ENCODE measurements at regions of chr2 and their contacts with region 1.

Region 1: DNA sequence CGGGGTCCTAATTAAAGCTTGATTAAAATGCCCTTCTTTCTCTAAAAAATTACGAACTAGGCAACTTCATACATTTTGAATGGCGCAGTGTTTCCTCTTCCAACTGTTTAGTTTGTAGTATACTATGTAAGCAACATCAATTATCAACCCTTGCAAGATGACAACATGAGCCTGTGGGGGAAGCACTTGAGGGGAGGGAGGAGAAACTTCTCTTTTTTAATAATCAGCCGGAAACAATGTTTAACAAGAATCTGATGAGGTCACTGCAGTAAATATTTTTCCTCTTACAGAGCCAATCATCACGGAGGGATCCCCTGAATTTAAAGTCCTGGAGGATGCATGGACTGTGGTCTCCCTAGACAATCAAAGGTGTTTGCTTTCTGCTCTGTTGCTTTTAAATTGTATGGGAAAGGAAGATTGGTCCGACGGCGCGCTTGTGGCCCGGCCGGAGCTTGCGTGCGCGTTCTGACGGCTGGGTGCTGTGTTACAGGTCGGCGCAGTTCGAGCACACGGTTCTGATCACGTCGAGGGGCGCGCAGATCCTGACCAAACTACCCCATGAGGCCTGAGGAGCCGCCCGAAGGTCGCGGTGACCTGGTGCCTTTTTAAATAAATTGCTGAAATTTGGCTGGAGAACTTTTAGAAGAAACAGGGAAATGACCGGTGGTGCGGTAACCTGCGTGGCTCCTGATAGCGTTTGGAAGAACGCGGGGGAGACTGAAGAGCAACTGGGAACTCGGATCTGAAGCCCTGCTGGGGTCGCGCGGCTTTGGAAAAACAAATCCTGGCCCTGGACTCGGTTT is 5.3 kb upstream of the DLX1 start:
- DNase-seq: no peak
- H3K4me3 ChIP-seq: no peak overlapping the region
- CTCF ChIP-seq: no peak

Region 2: DNA sequence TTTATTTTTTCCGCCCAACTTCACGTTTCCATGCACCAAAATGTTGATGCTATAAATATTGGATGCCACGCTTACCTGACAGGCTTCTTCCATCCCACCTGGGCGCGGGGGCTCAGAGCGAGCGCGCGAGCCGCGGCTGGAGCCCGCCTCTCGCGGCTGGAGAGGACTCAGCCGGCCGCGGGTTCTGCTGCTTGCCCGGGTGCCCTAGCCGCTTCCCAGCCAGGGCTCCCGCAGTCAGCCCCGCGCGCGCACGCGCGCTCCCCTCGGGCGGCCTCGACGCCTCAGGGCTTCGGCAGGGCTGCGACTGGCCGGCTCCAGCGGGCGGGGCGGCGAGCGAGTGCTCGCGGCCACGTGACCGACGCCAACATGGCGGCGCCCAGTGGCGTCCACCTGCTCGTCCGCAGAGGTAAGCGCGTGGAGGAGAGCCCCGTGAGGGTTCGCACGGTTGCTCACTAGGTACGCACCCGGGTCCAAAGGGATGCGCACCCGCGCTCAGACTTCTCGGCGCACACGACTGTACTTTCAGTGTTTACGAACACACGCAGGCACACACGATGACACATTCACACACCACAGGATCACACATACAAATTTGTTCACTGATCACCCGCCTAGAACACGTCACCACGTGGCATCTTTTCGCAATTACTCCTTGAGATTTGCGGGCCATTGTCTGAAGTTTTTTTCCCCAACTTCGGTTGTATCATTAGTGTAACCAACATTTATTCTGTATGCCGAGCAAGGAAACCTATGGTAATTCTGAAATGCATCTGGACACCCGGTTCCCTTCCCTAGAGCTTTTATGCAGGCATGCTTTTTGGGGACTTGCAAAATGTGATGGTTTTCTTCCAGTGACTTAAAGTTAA is 80.2 kb before region 1 on chr2 and contains the start of gene METAP1D:
- in situ Hi-C with region 1: loop called (anchors 10 kb)
- DNase-seq: peak; percentile 62
- H3K4me3 ChIP-seq: peak within 1 kb of the TSS; percentile 79
- CTCF ChIP-seq: no peak

Region 3: GRCh38 chr2:172208791-172209325 is 128.8 kb after region 1 on chr2:
- in situ Hi-C with region 1: no loop called
- DNase-seq: no peak
- H3K4me3 ChIP-seq: no peak overlapping the region
- CTCF ChIP-seq: no peak

Measured in astrocyte of the cerebellum (primary cell).